ENCODE measurements at regions of chr7 and their contacts with region 1.

Region 1: DNA sequence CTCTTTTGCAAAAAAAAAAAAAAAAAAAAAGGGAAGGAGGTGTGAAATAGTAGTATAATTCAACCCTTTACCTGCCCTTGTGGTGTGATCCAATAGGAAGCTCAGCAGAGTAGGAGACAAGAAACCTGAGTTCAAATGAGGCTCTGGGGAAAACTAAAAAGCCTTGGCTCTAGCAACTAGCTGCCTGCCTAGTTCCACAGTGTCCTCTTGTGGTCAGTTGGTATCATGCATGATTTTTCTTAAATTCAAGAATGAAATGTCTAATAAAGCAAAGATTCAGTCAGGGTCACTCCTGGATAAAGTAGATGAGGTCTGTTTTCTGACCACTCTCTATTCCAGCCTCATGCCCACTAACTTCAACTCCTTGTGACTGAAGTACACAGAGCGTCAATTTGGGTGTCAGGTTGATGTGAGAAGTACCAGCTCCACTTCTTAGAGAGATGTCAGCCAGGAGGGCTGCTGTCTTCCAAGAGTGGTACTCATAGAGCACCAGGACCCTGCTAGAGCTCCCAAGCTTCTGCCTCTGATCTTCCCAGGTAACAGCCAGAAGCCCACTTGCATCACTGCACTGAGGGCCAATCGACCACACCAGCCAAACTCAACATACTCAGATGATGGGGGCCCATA is 10.5 kb downstream of the LSM5 start:
- DNase-seq: peak; percentile 58
- H3K4me3 Mint-ChIP-seq: no peak overlapping the region
- H3K27ac Mint-ChIP-seq: no peak overlapping the region
- H3K4me1 Mint-ChIP-seq: peaks cover 6% of the 10 kb centered on the region
- H3K27me3 Mint-ChIP-seq: no peaks in the 10 kb centered on the region

Region 2: DNA sequence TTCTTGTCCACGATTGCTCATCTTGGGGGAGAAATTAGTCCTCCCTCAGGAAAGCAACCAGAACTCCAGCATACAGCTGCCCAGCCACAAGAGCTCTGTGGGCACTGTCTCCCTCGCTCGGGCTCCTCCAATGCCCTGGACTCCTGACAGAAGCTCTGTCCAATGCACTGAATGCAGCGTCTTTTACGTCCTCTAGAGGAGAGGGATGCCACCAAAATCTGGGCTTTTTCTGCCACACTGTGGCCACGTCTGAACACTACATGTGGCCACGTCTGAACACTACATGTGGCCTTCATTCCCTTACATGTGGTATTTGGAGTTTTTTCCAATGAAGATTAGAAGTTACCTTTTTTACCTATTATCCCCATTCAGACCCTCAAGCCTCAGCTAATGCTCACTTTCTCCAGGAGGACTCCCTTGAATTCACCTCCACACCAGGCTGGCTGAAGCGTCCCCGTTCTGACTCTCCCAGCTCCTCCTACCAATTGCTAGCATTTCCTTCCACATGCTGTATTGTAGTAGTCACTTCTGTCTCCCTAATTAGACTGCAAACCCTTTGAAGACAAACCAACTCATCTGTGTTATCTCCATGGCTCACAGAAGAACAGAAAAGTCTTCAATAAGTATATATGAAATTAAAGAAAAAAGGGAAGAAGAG is 275.2 kb before region 1 on chr7:
- CTCF ChIA-PET with region 1: interaction called, 19 read pairs
- intact Hi-C with region 1: no loop called
- DNase-seq: peak; percentile 25
- H3K4me3 Mint-ChIP-seq: no peak overlapping the region
- H3K27ac Mint-ChIP-seq: no peak overlapping the region
- H3K4me1 Mint-ChIP-seq: no peaks in the 10 kb centered on the region
- H3K27me3 Mint-ChIP-seq: peaks cover 9% of the 10 kb centered on the region

Region 3: DNA sequence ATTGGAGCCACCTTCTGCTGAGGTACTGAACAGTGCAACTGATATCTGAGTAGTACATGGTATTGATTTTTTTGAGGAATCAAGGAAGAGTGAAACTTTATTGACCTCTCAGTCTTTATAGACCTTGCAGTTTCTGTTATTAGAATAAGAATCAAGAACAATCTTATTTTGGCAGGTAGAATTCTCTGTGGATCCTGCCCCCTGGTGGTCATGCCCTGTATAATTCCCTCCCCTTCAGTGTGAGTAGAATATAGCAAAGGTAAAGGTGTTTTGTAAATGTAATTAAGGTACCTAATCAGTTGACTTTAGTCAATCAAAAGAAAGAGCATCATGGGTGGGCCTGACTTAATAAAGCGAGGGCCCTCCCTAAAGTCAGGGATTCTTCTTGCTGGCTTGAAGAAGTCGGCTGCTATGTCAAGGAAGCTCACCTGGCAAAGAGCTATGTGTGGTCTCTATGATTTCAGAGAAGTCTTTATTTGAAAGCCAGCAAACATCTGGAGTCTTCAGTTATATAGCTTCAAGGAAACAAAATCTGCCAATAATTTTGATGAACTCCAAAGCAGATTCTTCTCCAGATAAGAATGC is 132.4 kb before region 1 on chr7:
- CTCF ChIA-PET with region 1: interaction called, 3 read pairs
- intact Hi-C with region 1: loop called (anchors 2 kb)
- DNase-seq: peak; percentile 52
- H3K4me3 Mint-ChIP-seq: no peak overlapping the region
- H3K27ac Mint-ChIP-seq: no peak overlapping the region
- H3K4me1 Mint-ChIP-seq: no peaks in the 10 kb centered on the region
- H3K27me3 Mint-ChIP-seq: peaks cover 3% of the 10 kb centered on the region

Measured in activated naive CD4-positive, alpha-beta T cell treated with anti-CD3 and anti-CD28 coated beads for 36 hours (primary cell).